ENCODE measurements at regions of chr1 and their contacts with region 1.

Region 1: DNA sequence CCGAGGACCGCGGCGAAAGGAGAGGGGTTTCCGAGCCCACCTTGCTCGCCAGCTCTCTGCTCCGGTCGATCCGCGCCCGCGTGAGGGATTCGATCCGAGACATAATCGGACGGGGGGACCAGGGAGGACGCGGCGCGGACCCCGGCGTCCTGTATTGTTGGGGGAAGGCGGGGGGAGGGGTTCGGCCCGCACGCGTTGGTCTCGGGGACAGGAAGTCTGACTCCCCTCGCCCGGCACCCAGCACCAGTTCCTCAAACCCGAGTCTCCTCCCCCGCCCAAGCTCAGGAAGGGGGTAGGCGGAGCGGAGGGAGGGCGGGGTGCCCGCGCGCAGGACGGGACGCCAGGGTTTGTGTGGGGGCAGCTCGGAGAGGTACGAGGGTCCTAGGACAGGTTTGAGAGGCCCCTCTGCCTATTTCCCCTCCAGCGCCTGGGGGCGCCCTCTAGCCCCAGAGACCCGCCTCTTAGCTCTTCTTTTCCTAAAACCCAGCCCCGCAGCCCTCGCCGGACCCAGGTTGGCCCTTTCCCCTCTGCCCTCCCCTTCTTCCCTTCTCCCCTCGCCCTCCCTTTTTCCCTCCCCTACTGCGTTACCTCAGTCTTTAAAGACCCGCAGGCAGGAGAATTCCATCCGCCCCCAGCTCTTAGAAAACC is at the start of gene ARHGEF2:
- DNase-seq: peak; percentile 84 to 86 (median 85)
- H3K4me3 ChIP-seq: peak within 1 kb of the TSS; percentile 78
- H3K27ac ChIP-seq: peak within 1 kb of the TSS; percentile 75 to 91
- H3K4me1 ChIP-seq: peaks cover 33% of the 10 kb centered on the region
- H3K27me3 ChIP-seq: no peaks in the 10 kb centered on the region
- CTCF ChIP-seq: peak in 1 of 3 donors; percentile 12
- EP300 ChIP-seq: no peak
- POLR2A ChIP-seq: peak; percentile 43
- total RNA-seq, gene ARHGEF2: 41.0 to 221 (median 63.3) TPM

Region 2: GRCh38 chr1:155859881-155860871 is 118.3 kb before region 1 on chr1:
- intact Hi-C with region 1: loop called in 1 of 4 experiments (anchors 5 kb)
- DNase-seq: peak; percentile 88 to 92 (median 90)
- H3K4me3 ChIP-seq: peak overlapping the region; percentile 39
- H3K27ac ChIP-seq: peak overlapping the region; percentile 88 to 89
- H3K4me1 ChIP-seq: peaks cover 7% of the 10 kb centered on the region
- H3K27me3 ChIP-seq: no peaks in the 10 kb centered on the region
- CTCF ChIP-seq: peak in 1 of 3 donors; percentile 15
- EP300 ChIP-seq: no peak
- POLR2A ChIP-seq: peak; percentile 47

Region 3: DNA sequence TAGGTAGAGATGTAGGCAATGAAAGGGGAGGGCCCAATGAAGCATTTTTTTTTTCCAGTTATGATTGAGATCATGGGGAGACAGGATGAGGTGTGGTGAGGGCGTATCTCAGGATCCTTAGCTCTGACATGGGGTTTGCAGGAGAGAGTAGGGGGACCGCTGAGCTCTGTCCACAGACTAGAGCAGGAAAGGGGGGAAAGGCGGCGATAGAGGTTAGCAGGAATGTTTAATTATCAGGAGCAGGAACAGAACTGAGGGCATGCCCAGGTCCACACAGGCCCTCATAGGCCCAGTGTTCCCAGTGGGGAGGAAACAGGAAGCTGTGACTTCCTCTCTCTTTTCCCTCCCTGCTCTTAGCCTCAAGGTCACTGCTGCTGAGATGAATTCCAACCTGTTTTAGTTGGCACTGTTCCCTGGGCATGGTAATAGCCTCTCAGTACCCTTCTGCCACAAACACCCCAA is 37.9 kb before region 1 on chr1:
- intact Hi-C with region 1: loop called (anchors 5 kb)
- DNase-seq: peak in 4 of 5 donors; percentile 42 to 61 (median 53)
- H3K4me3 ChIP-seq: no peak overlapping the region
- H3K27ac ChIP-seq: peak overlapping the region in 1 of 2 donors; percentile 66
- H3K4me1 ChIP-seq: peaks cover 6% of the 10 kb centered on the region
- H3K27me3 ChIP-seq: no peaks in the 10 kb centered on the region
- CTCF ChIP-seq: no peak
- EP300 ChIP-seq: no peak
- POLR2A ChIP-seq: no peak

Region 4: GRCh38 chr1:157312082-157312812 is 1333.8 kb after region 1 on chr1:
- intact Hi-C with region 1: no loop called
- DNase-seq: no peak
- H3K4me3 ChIP-seq: no peak overlapping the region
- H3K27ac ChIP-seq: no peak overlapping the region
- H3K4me1 ChIP-seq: no peaks in the 10 kb centered on the region
- H3K27me3 ChIP-seq: no peaks in the 10 kb centered on the region
- CTCF ChIP-seq: no peak
- EP300 ChIP-seq: no peak
- POLR2A ChIP-seq: no peak